Mammary epithelial cell (primary cell): ENCODE measurements at regions of chr9 and their contacts with region 1.

Region 1: GRCh38 chr9:76393963-76394679 is at the start of gene RFK:
- DNase-seq: peak; percentile 91
- H3K4me3 ChIP-seq: peak within 1 kb of the TSS; percentile 73 to 93 (median 91)
- H3K27ac ChIP-seq: peak within 1 kb of the TSS; percentile 95
- H3K4me1 ChIP-seq: peaks cover 8% of the 10 kb centered on the region
- H3K27me3 ChIP-seq: no peaks in the 10 kb centered on the region
- CTCF ChIP-seq: peak; percentile 14 to 48
- total RNA-seq, gene RFK: 18.2 to 32.3 TPM

Region 2: DNA sequence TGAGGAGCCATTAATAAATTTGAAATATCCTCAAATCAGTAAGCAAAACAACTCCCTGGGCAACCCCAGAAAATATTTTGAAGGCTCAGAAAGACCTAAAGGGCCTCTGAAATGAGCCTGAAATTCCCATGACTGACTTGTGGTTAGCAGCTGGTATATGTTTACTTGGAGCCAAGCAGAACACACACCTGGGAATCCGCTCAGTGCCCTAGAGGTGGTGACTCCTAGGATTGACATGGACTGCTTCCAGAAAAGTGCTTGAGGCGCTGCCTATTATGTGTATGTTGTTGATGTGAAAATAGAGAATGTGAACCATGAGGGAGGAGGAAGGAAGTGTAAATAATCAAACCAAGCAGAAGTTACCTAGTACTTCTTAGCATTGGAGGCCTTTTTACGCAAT is 14.6 kb before region 1 on chr9:
- CTCF ChIA-PET with region 1: no interaction called
- dilution Hi-C with region 1: no loop called
- in situ Hi-C with region 1: no loop called
- intact Hi-C with region 1: loop called (anchors 2 kb)
- DNase-seq: peak; percentile 92
- H3K4me3 ChIP-seq: no peak overlapping the region
- H3K27ac ChIP-seq: peak overlapping the region; percentile 12
- H3K4me1 ChIP-seq: peaks cover 3% of the 10 kb centered on the region
- H3K27me3 ChIP-seq: no peaks in the 10 kb centered on the region
- CTCF ChIP-seq: no peak

Region 3: GRCh38 chr9:76562511-76562911 is 168.4 kb after region 1 on chr9:
- CTCF ChIA-PET with region 1: no interaction called
- dilution Hi-C with region 1: no loop called
- in situ Hi-C with region 1: no loop called
- intact Hi-C with region 1: loop called (anchors 10 kb)
- DNase-seq: peak; percentile 81
- H3K4me3 ChIP-seq: no peak overlapping the region
- H3K27ac ChIP-seq: peak overlapping the region; percentile 65
- H3K4me1 ChIP-seq: peaks cover 42% of the 10 kb centered on the region
- H3K27me3 ChIP-seq: no peaks in the 10 kb centered on the region
- CTCF ChIP-seq: no peak

Region 4: GRCh38 chr9:76651119-76651705 is 257.1 kb after region 1 on chr9:
- CTCF ChIA-PET with region 1: interaction called, 5 read pairs
- dilution Hi-C with region 1: no loop called
- in situ Hi-C with region 1: no loop called
- intact Hi-C with region 1: loop called (anchors 2 kb)
- DNase-seq: no peak
- H3K4me3 ChIP-seq: no peak overlapping the region
- H3K27ac ChIP-seq: no peak overlapping the region
- H3K4me1 ChIP-seq: peaks cover 25% of the 10 kb centered on the region
- H3K27me3 ChIP-seq: no peaks in the 10 kb centered on the region
- CTCF ChIP-seq: no peak